Heart left ventricle (tissue), 16 donors: ENCODE measurements at regions of chr1 and their contacts with region 1.

Region 1: DNA sequence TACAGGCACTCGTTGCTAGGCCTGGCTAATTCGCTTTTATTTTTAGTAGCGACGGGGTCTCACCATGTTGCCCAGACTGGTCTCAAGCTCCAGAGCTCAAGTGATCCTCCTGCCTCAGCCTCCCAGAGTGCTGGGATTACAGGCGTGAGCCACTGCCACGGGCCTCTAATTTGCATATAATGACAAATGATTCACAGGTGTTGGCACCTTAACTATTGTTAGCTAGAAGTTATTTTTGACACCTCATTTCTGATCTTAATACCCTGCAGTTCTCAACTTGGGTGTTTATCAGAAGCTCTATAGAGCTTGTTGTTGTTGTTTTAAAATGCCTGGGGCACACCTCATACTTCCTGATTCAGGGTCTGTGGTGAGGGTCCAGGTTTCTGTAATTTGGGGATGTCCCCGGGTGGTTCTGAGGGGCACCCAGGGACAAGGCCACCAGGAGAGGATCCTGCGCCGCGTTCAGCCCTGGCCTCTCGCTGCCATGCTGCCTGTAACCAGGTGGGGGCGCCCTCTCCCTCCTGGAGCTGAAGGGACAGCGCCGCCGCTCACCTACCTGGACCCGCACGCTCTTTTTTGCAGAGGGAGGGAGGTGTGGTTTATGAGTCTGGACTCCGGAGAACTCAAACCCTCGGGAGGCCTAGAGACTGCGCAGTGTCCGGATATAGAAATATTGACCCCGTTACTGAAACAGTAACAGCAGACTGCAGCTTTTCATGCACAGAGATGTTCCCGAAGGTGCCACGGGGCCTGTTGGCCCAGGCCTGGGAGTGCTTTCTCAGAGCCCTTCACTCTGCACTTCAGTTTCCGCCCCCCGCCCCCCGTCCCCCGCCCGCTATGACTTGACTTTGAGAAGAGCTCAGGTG is 23.0 kb upstream of the NEK2 start:
- DNase-seq: peak; percentile 64 to 89 (median 76)
- ATAC-seq: peak; percentile 57 to 95 (median 90)
- H3K4me3 ChIP-seq: peak overlapping the region in 8 of 12 donors; percentile 9 to 40 (median 31)
- H3K27ac ChIP-seq: no peak overlapping the region
- H3K4me1 ChIP-seq: peaks cover 0 to 11% (median 2%) of the 10 kb centered on the region in 12 donors
- H3K27me3 ChIP-seq: peaks cover 0 to 5% (median 0%) of the 10 kb centered on the region in 9 donors
- CTCF ChIP-seq: peak; percentile 87 to 98 (median 90)
- POLR2A ChIP-seq: no peak

Region 2: GRCh38 chr1:211752951-211753486 is 54.6 kb after region 1 on chr1:
- intact Hi-C with region 1: loop called in 1 of 10 experiments (anchors 10 kb)
- DNase-seq: no peak
- ATAC-seq: no peak
- H3K4me3 ChIP-seq: no peak overlapping the region
- H3K27ac ChIP-seq: no peak overlapping the region
- H3K4me1 ChIP-seq: peaks cover 0 to 10% (median 0%) of the 10 kb centered on the region in 12 donors
- H3K27me3 ChIP-seq: no peaks in the 10 kb centered on the region
- CTCF ChIP-seq: no peak
- POLR2A ChIP-seq: no peak

Region 3: GRCh38 chr1:211944733-211945500 is 246.5 kb after region 1 on chr1:
- intact Hi-C with region 1: loop called in 5 of 10 experiments (anchors 5 to 10 kb)
- DNase-seq: peak in 2 of 5 donors; percentile 34 to 50
- ATAC-seq: peak in 3 of 4 donors; percentile 76 to 87 (median 83)
- H3K4me3 ChIP-seq: no peak overlapping the region
- H3K27ac ChIP-seq: no peak overlapping the region
- H3K4me1 ChIP-seq: peaks cover 0 to 15% (median 0%) of the 10 kb centered on the region in 12 donors
- H3K27me3 ChIP-seq: no peaks in the 10 kb centered on the region
- CTCF ChIP-seq: peak in 11 of 12 donors; percentile 11 to 63 (median 40)
- POLR2A ChIP-seq: no peak

Region 4: DNA sequence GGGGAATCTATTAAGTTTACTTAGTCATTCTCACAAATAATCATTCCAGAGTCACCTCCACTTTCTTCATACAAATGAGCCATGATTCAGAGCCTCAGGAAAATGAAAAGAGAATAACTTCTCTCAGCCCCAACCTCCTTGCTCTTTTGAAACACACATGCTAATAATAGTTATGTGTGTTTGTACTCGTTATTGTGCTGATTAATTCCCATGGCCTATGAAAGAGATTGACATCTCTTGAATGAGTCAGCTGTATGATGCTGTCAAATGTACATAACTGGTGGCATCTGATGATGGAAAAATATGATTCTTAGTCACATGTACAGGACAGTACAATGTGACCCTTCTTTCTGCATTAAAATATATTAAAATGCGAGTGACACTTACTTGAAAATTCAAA is 378.7 kb after region 1 on chr1:
- intact Hi-C with region 1: no loop called
- DNase-seq: no peak
- ATAC-seq: no peak
- H3K4me3 ChIP-seq: no peak overlapping the region
- H3K27ac ChIP-seq: peak overlapping the region in 1 of 12 donors; percentile 52
- H3K4me1 ChIP-seq: peaks cover 0 to 10% (median 0%) of the 10 kb centered on the region in 12 donors
- H3K27me3 ChIP-seq: no peaks in the 10 kb centered on the region
- CTCF ChIP-seq: no peak
- POLR2A ChIP-seq: no peak